Naive thymus-derived CD4-positive, alpha-beta T cell (primary cell): ENCODE measurements at regions of chrX and their contacts with region 1.

Region 1: GRCh38 chrX:15143050-15143824 is 126.6 kb downstream of the ASB9 start:
- DNase-seq: peak in 7 of 9 donors; percentile 5 to 45 (median 39)
- ATAC-seq: peak; percentile 63
- H3K4me3 ChIP-seq: no peak overlapping the region
- H3K4me3 Mint-ChIP-seq: peak overlapping the region in 9 of 10 donors; percentile 10 to 77 (median 58)
- H3K27ac ChIP-seq: no peak overlapping the region
- H3K27ac Mint-ChIP-seq: peak overlapping the region in 6 of 9 donors; percentile 17 to 91 (median 70)
- H3K4me1 ChIP-seq: peaks cover 0 to 5% of the 10 kb centered on the region in 2 donors
- H3K4me1 Mint-ChIP-seq: peaks cover 4 to 23% (median 17%) of the 10 kb centered on the region in 7 donors
- H3K27me3 ChIP-seq: no peaks in the 10 kb centered on the region
- H3K27me3 Mint-ChIP-seq: peaks cover 0 to 3% (median 0%) of the 10 kb centered on the region in 5 donors

Region 2: DNA sequence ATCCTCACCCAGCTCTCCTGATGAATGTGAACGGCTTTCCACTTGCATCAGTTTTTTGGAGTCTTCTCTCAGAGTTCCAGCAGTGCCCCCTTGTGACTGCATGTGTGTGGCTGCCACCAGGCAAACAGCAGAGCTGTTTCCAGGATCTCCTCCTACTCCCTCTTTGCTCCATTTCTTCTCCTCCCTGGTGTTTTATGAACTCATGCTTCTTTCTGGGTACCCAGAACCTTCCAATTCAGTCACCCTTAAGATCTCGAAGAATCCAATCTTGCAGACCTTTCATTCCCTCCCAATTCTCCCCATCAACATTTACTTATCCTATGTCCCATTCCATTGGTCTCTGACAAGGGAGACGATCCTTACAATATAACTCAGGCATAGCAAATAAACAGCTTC is 1497.1 kb before region 1 on chrX:
- CTCF ChIA-PET with region 1: no interaction called
- POLR2A ChIA-PET with region 1: no interaction called
- intact Hi-C with region 1: loop called in 1 of 2 experiments (anchors 10 kb)
- DNase-seq: peak in 4 of 9 donors; percentile 4 to 23 (median 11)
- ATAC-seq: no peak
- H3K4me3 ChIP-seq: no peak overlapping the region
- H3K4me3 Mint-ChIP-seq: no peak overlapping the region
- H3K27ac ChIP-seq: no peak overlapping the region
- H3K27ac Mint-ChIP-seq: peak overlapping the region in 3 of 9 donors; percentile 32 to 65 (median 52)
- H3K4me1 ChIP-seq: no peaks in the 10 kb centered on the region
- H3K4me1 Mint-ChIP-seq: peaks cover 0 to 14% (median 6%) of the 10 kb centered on the region in 7 donors
- H3K27me3 ChIP-seq: no peaks in the 10 kb centered on the region
- H3K27me3 Mint-ChIP-seq: no peaks in the 10 kb centered on the region

Region 3: GRCh38 chrX:14095702-14096101 is 1047.5 kb before region 1 on chrX:
- CTCF ChIA-PET with region 1: interaction called, 3 read pairs
- POLR2A ChIA-PET with region 1: no interaction called
- intact Hi-C with region 1: loop called (anchors 1 kb)
- DNase-seq: peak in 8 of 9 donors; percentile 5 to 45 (median 24)
- ATAC-seq: peak; percentile 74
- H3K4me3 ChIP-seq: no peak overlapping the region
- H3K4me3 Mint-ChIP-seq: peak overlapping the region in 6 of 10 donors; percentile 9 to 71 (median 47)
- H3K27ac ChIP-seq: no peak overlapping the region
- H3K27ac Mint-ChIP-seq: peak overlapping the region in 1 of 9 donors; percentile 28
- H3K4me1 ChIP-seq: no peaks in the 10 kb centered on the region
- H3K4me1 Mint-ChIP-seq: peaks cover 0 to 8% (median 0%) of the 10 kb centered on the region in 7 donors
- H3K27me3 ChIP-seq: no peaks in the 10 kb centered on the region
- H3K27me3 Mint-ChIP-seq: peaks cover 0 to 4% (median under 1%) of the 10 kb centered on the region in 5 donors

Region 4: GRCh38 chrX:14616836-14617235 is 526.4 kb before region 1 on chrX:
- CTCF ChIA-PET with region 1: no interaction called
- POLR2A ChIA-PET with region 1: no interaction called
- intact Hi-C with region 1: no loop called
- DNase-seq: no peak
- ATAC-seq: no peak
- H3K4me3 ChIP-seq: no peak overlapping the region
- H3K4me3 Mint-ChIP-seq: no peak overlapping the region
- H3K27ac ChIP-seq: no peak overlapping the region
- H3K27ac Mint-ChIP-seq: no peak overlapping the region
- H3K4me1 ChIP-seq: no peaks in the 10 kb centered on the region
- H3K4me1 Mint-ChIP-seq: no peaks in the 10 kb centered on the region
- H3K27me3 ChIP-seq: no peaks in the 10 kb centered on the region
- H3K27me3 Mint-ChIP-seq: peaks cover 0 to 6% (median 0%) of the 10 kb centered on the region in 5 donors

Region 5: GRCh38 chrX:14872851-14873675 is 270.2 kb before region 1 on chrX and contains the starts of genes FANCB and MOSPD2:
- CTCF ChIA-PET with region 1: no interaction called
- POLR2A ChIA-PET with region 1: no interaction called
- intact Hi-C with region 1: loop called (anchors 1 to 10 kb)
- DNase-seq: peak; percentile 83 to 96 (median 93)
- ATAC-seq: peak; percentile 95
- H3K4me3 ChIP-seq: peak within 1 kb of the TSS; percentile 76
- H3K4me3 Mint-ChIP-seq: peak within 1 kb of the TSS; percentile 82 to 94 (median 88)
- H3K27ac ChIP-seq: peak within 1 kb of the TSS; percentile 76
- H3K27ac Mint-ChIP-seq: peak within 1 kb of the TSS; percentile 75 to 93 (median 88)
- H3K4me1 ChIP-seq: peaks cover 4 to 9% of the 10 kb centered on the region in 2 donors
- H3K4me1 Mint-ChIP-seq: peaks cover 0 to 34% (median 14%) of the 10 kb centered on the region in 7 donors
- H3K27me3 ChIP-seq: no peaks in the 10 kb centered on the region
- H3K27me3 Mint-ChIP-seq: no peaks in the 10 kb centered on the region
- total RNA-seq, gene FANCB: 3.3 to 8.3 (median 4.0) TPM
- total RNA-seq, gene MOSPD2: 7.1 to 15.7 (median 13.4) TPM

Region 6: GRCh38 chrX:15128861-15129260 is 14.4 kb before region 1 on chrX:
- CTCF ChIA-PET with region 1: no interaction called
- POLR2A ChIA-PET with region 1: no interaction called
- intact Hi-C with region 1: no loop called
- DNase-seq: no peak
- ATAC-seq: no peak
- H3K4me3 ChIP-seq: no peak overlapping the region
- H3K4me3 Mint-ChIP-seq: no peak overlapping the region
- H3K27ac ChIP-seq: no peak overlapping the region
- H3K27ac Mint-ChIP-seq: no peak overlapping the region
- H3K4me1 ChIP-seq: no peaks in the 10 kb centered on the region
- H3K4me1 Mint-ChIP-seq: no peaks in the 10 kb centered on the region
- H3K27me3 ChIP-seq: no peaks in the 10 kb centered on the region
- H3K27me3 Mint-ChIP-seq: peaks cover 0 to 5% (median 0%) of the 10 kb centered on the region in 5 donors

Region 7: GRCh38 chrX:15158736-15159406 is 15.6 kb after region 1 on chrX:
- CTCF ChIA-PET with region 1: no interaction called
- POLR2A ChIA-PET with region 1: interaction called, 5 read pairs
- intact Hi-C with region 1: loop called in 1 of 2 experiments (anchors 1 kb)
- DNase-seq: peak in 5 of 9 donors; percentile 16 to 36 (median 21)
- ATAC-seq: peak; percentile 57
- H3K4me3 ChIP-seq: peak overlapping the region; percentile 36
- H3K4me3 Mint-ChIP-seq: peak overlapping the region; percentile 52 to 91 (median 82)
- H3K27ac ChIP-seq: no peak overlapping the region
- H3K27ac Mint-ChIP-seq: peak overlapping the region; percentile 72 to 98 (median 92)
- H3K4me1 ChIP-seq: peaks cover 7 to 17% of the 10 kb centered on the region in 2 donors
- H3K4me1 Mint-ChIP-seq: peaks cover 3 to 52% (median 39%) of the 10 kb centered on the region in 7 donors
- H3K27me3 ChIP-seq: no peaks in the 10 kb centered on the region
- H3K27me3 Mint-ChIP-seq: no peaks in the 10 kb centered on the region

Region 8: GRCh38 chrX:15242899-15243555 is 99.8 kb after region 1 on chrX:
- CTCF ChIA-PET with region 1: interaction called, 3 read pairs
- POLR2A ChIA-PET with region 1: no interaction called
- intact Hi-C with region 1: loop called (anchors 1 kb)
- DNase-seq: peak in 6 of 9 donors; percentile 8 to 40 (median 22)
- ATAC-seq: no peak
- H3K4me3 ChIP-seq: no peak overlapping the region
- H3K4me3 Mint-ChIP-seq: no peak overlapping the region
- H3K27ac ChIP-seq: no peak overlapping the region
- H3K27ac Mint-ChIP-seq: no peak overlapping the region
- H3K4me1 ChIP-seq: no peaks in the 10 kb centered on the region
- H3K4me1 Mint-ChIP-seq: peaks cover 0 to 7% (median 0%) of the 10 kb centered on the region in 7 donors
- H3K27me3 ChIP-seq: no peaks in the 10 kb centered on the region
- H3K27me3 Mint-ChIP-seq: no peaks in the 10 kb centered on the region